ENCODE measurements at regions of chr1 and their contacts with region 1.

Region 1: GRCh38 chr1:198520524-198521254 is 19.8 kb downstream of the ATP6V1G3 start:
- DNase-seq: peak; percentile 21
- H3K4me3 Mint-ChIP-seq: peak overlapping the region; percentile 75
- H3K27ac Mint-ChIP-seq: peak overlapping the region; percentile 92
- H3K4me1 Mint-ChIP-seq: peaks cover 57% of the 10 kb centered on the region
- H3K27me3 Mint-ChIP-seq: no peaks in the 10 kb centered on the region

Region 2: GRCh38 chr1:197915862-197916499 is 604.7 kb before region 1 on chr1:
- CTCF ChIA-PET with region 1: no interaction called
- intact Hi-C with region 1: no loop called
- DNase-seq: no peak
- H3K4me3 Mint-ChIP-seq: peak overlapping the region; percentile 55
- H3K27ac Mint-ChIP-seq: no peak overlapping the region
- H3K4me1 Mint-ChIP-seq: peaks cover 77% of the 10 kb centered on the region
- H3K27me3 Mint-ChIP-seq: peaks cover 94% of the 10 kb centered on the region

Region 3: GRCh38 chr1:198465201-198466144 is 55.2 kb before region 1 on chr1:
- CTCF ChIA-PET with region 1: no interaction called
- intact Hi-C with region 1: loop called (anchors 2 kb)
- DNase-seq: no peak
- H3K4me3 Mint-ChIP-seq: no peak overlapping the region
- H3K27ac Mint-ChIP-seq: no peak overlapping the region
- H3K4me1 Mint-ChIP-seq: peaks cover 13% of the 10 kb centered on the region
- H3K27me3 Mint-ChIP-seq: no peaks in the 10 kb centered on the region

Region 4: GRCh38 chr1:198575798-198576641 is 55.3 kb after region 1 on chr1:
- CTCF ChIA-PET with region 1: no interaction called
- intact Hi-C with region 1: no loop called
- DNase-seq: no peak
- H3K4me3 Mint-ChIP-seq: no peak overlapping the region
- H3K27ac Mint-ChIP-seq: no peak overlapping the region
- H3K4me1 Mint-ChIP-seq: peaks cover 22% of the 10 kb centered on the region
- H3K27me3 Mint-ChIP-seq: no peaks in the 10 kb centered on the region

Region 5: GRCh38 chr1:198612471-198613260 is 92.0 kb after region 1 on chr1:
- CTCF ChIA-PET with region 1: interaction called, 3 read pairs
- intact Hi-C with region 1: loop called (anchors 1 kb)
- DNase-seq: no peak
- H3K4me3 Mint-ChIP-seq: peak overlapping the region; percentile 82
- H3K27ac Mint-ChIP-seq: peak overlapping the region; percentile 98
- H3K4me1 Mint-ChIP-seq: peaks cover 80% of the 10 kb centered on the region
- H3K27me3 Mint-ChIP-seq: no peaks in the 10 kb centered on the region

Region 6: DNA sequence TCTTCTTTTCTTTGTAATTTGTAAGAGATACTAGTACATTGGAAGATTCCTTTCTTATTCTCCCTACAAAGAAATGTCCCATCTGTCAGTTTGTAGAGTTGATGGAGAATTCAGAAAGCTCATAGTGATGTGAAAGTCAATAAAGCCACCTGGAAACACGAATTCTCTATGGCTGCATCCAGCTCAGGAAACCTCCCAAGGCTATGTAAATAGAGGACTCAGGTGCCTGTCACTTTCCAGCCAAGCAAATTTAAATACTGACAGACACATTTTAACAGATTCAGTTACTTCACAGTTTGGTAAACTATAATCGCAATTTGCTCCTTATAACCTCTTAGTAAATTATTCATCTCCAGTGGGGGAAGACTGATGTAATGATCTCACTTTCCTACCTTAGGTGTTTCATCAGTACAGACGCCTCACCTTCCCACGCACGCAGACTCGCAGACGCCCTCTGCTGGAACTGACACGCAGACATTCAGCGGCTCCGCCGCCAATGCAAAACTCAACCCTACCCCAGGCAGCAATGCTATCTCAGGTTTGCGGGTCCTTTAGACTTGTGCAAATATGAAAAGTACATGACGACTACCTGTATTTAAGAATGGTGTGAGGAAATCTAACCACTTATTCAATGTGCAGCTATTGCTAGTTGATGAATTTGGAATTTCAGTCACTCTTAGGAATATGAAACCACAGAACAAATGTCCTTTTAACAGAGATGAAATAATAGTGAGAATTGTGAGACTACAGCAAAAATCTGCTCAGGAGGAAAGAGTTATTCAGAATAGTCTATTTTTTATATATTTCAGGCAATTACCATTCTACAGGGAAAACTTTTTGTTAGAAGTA is 178.7 kb after region 1 on chr1:
- CTCF ChIA-PET with region 1: interaction called, 4 read pairs
- intact Hi-C with region 1: loop called (anchors 1 kb)
- DNase-seq: peak; percentile 86
- H3K4me3 Mint-ChIP-seq: peak overlapping the region; percentile 19
- H3K27ac Mint-ChIP-seq: peak overlapping the region; percentile 83
- H3K4me1 Mint-ChIP-seq: peaks cover 81% of the 10 kb centered on the region
- H3K27me3 Mint-ChIP-seq: no peaks in the 10 kb centered on the region

Region 7: GRCh38 chr1:198937231-198938031 is 416.7 kb after region 1 on chr1:
- CTCF ChIA-PET with region 1: no interaction called
- intact Hi-C with region 1: loop called (anchors 1 kb)
- DNase-seq: peak; percentile 72
- H3K4me3 Mint-ChIP-seq: peak overlapping the region; percentile 89
- H3K27ac Mint-ChIP-seq: peak overlapping the region; percentile 84
- H3K4me1 Mint-ChIP-seq: peaks cover 21% of the 10 kb centered on the region
- H3K27me3 Mint-ChIP-seq: no peaks in the 10 kb centered on the region

Region 8: DNA sequence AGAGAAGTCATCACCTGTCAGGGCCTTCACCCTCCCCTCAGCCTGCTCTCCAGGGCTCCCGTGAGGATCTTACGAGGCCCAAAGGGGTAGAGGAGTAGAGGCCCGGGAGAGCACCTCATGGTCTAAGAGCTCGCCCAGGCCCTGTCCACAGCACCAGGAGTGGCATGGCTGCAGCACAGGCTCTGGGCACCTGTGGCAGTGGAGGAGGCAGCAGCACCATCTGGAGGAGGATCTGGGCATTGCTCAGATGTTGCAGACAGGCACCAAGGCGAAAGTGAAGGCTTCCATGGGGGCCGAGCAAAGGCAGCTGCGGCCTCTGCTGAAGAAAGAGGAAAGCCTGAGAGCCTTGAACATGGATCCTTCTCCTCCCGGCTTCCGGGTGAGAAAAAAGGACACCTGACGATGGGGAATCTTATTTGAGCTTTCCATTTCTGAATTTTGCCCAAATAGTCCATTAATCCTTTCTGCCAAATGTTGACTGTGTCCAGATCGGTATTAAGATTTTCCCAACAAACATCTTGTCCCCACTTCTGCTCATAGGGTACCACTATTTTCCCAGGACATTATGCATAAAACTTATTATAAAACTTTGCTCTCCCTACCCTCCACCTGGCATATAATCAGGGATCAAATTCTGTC is 722.9 kb after region 1 on chr1:
- CTCF ChIA-PET with region 1: no interaction called
- intact Hi-C with region 1: loop called (anchors 5 kb)
- DNase-seq: peak; percentile 86
- H3K4me3 Mint-ChIP-seq: no peak overlapping the region
- H3K27ac Mint-ChIP-seq: no peak overlapping the region
- H3K4me1 Mint-ChIP-seq: no peaks in the 10 kb centered on the region
- H3K27me3 Mint-ChIP-seq: peaks cover 9% of the 10 kb centered on the region